Ascending aorta (tissue), 2 donors: ENCODE measurements at regions of chr2 and their contacts with region 1.

Region 1: GRCh38 chr2:187581125-187581896 is 27.1 kb upstream of the TFPI start:
- DNase-seq: no peak
- H3K4me3 ChIP-seq: peak overlapping the region; percentile 39 to 52
- H3K27ac ChIP-seq: no peak overlapping the region
- H3K4me1 ChIP-seq: no peaks in the 10 kb centered on the region
- H3K27me3 ChIP-seq: no peaks in the 10 kb centered on the region
- CTCF ChIP-seq: peak; percentile 59 to 66 (median 65)

Region 2: DNA sequence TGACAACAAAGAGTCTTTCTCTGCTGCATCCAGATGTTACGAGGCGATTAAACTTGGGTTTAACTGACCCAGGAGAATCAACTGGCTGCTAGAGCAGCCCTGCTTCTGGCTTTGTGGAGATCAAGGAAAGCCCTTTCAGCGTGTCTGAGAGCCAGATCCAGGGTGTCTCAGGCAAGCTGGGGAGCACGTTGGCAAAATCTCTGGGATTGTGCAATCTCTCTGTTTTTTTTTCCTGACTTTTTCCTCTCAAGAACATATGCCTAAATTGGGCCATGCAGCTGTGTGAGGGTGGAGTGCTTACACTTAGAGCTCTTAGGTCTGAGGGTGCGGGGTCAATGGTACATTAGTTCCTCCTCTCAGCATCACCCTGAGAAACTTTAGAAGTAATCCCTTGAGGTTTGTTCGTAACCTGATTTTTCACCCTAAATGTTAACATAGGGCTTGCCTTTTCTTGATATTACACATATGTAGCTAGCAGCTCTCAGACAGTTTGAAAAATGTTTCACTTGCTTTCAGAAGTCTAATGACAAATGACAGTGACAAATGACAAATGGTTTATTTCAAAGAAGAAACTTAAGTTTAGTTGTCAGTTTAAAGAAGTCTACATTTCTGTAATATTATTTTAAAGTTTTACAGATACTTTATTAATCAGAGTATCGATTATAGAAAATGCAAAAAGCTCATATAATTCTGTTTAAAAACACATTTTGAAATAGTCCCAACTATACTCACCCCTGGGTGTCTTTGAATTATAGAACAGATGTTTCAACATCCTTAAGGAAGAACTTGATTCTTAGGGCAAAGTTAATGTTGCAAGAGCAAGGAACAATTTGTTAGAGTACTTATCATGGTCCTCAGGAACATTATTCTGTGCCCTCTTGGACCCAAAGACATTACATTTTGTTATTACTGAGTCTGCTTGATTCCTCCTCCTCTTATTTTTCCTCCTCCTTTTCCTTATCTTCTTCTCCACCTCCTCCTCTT is 693.9 kb before region 1 on chr2:
- intact Hi-C with region 1: no loop called
- DNase-seq: no peak
- H3K4me3 ChIP-seq: no peak overlapping the region
- H3K27ac ChIP-seq: peak overlapping the region in 1 of 2 donors; percentile 62
- H3K4me1 ChIP-seq: peaks cover 0 to 20% of the 10 kb centered on the region in 2 donors
- H3K27me3 ChIP-seq: no peaks in the 10 kb centered on the region
- CTCF ChIP-seq: no peak

Region 3: DNA sequence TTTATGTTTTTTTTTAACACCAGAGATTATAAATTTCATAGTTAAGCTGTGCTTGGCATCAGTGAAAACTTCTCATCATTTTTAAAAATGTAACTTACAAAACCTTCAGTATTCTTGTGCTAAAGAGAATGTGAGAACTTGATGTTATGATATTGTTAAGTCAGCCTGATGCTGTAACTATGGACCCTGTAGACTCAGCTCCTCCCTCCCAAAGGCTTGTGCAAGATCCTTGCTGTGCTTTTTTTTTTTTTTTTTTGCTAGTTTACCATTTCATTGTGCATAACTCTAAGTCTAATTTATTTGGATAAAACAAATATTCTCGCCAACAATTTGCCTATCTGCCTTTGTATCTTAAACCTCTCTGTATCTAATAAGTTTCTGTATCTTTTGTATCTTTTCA is 14.2 kb before region 1 on chr2:
- intact Hi-C with region 1: no loop called
- DNase-seq: no peak
- H3K4me3 ChIP-seq: no peak overlapping the region
- H3K27ac ChIP-seq: no peak overlapping the region
- H3K4me1 ChIP-seq: no peaks in the 10 kb centered on the region
- H3K27me3 ChIP-seq: no peaks in the 10 kb centered on the region
- CTCF ChIP-seq: no peak

Region 4: GRCh38 chr2:187842978-187843847 is 261.9 kb after region 1 on chr2:
- intact Hi-C with region 1: loop called (anchors 1 kb)
- DNase-seq: no peak
- H3K4me3 ChIP-seq: no peak overlapping the region
- H3K27ac ChIP-seq: peak overlapping the region in 1 of 2 donors; percentile 52
- H3K4me1 ChIP-seq: peaks cover 0 to 4% of the 10 kb centered on the region in 2 donors
- H3K27me3 ChIP-seq: no peaks in the 10 kb centered on the region
- CTCF ChIP-seq: peak; percentile 57 to 65 (median 58)

Region 5: DNA sequence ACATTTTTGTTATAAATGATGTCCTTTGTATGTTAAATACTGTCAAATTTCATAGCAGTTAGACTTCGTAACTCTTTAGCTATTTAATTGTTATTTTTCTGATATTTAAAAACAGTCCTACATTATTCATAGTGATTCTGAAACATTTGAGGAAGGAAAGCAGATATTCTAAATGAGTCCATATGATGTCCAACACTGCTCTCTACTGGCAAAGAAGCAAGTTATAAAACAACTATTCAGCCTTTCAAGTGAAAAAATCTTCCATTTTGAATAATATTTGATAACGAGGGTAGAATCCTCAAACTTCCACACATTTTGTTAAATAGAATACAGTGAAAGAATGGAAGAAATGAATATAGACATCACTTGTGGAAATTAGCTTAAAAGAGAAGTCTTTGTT is 931.1 kb after region 1 on chr2:
- intact Hi-C with region 1: loop called (anchors 5 kb)
- DNase-seq: no peak
- H3K4me3 ChIP-seq: no peak overlapping the region
- H3K27ac ChIP-seq: no peak overlapping the region
- H3K4me1 ChIP-seq: peaks cover 2 to 7% of the 10 kb centered on the region in 2 donors
- H3K27me3 ChIP-seq: no peaks in the 10 kb centered on the region
- CTCF ChIP-seq: peak; percentile 48 to 60 (median 48)